PC-9 (cell line): ENCODE measurements at regions of chr16 and their contacts with region 1.

Region 1: GRCh38 chr16:4924593-4925378 is 12.2 kb downstream of the PPL start:
- DNase-seq: peak; percentile 96 to 99
- H3K4me3 ChIP-seq: peak overlapping the region; percentile 15; the same call in 1 of the 2 replicates
- H3K27ac ChIP-seq: peak overlapping the region; percentile 65
- H3K4me1 ChIP-seq: peaks cover 45% of the 10 kb centered on the region
- H3K27me3 ChIP-seq: no peaks in the 10 kb centered on the region
- CTCF ChIP-seq: no peak

Region 2: GRCh38 chr16:4624015-4624826 is 300.6 kb before region 1 on chr16 and contains the start of gene MGRN1:
- CTCF ChIA-PET with region 1: interaction called, 10 read pairs
- POLR2A ChIA-PET with region 1: no interaction called
- intact Hi-C with region 1: no loop called
- DNase-seq: peak; percentile 90 to 97
- H3K4me3 ChIP-seq: peak within 1 kb of the TSS; percentile 99
- H3K27ac ChIP-seq: peak within 1 kb of the TSS; percentile 69
- H3K4me1 ChIP-seq: peaks cover 7% of the 10 kb centered on the region
- H3K27me3 ChIP-seq: no peaks in the 10 kb centered on the region
- CTCF ChIP-seq: peak; percentile 96
- total RNA-seq, gene MGRN1: 67.9 and 70.4 TPM in 2 replicates

Region 3: DNA sequence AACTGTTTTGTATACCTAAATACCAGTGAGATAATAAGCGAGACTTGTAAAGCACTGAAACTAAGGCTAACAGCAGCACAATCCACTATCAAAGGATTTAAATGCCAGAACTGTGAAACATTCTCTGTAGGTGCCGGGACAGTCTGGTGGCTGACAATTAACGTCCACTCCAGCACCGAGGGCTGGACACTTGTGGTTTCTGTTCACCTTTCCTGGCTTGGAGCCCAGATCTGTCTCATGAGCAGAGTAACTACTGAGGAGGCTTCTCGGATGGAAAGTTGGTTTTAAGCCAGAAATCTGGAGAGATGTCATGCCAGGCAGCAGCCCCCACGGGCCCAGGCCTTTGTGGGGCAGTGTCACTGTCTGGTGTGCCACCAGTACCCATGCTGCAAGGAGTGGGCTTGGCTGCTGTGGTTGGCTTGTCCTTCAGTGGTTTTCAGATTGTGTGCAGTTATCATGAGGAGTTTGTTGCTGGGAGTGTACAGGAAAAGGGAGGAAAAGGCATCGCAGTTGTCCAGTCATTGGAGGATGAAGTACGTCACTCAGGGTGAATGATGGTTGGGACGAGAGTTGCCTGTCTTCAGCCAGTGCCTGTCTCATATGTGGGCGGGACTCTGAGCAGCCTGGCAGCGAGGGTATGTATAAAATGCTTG is 42.0 kb before region 1 on chr16:
- CTCF ChIA-PET with region 1: no interaction called
- POLR2A ChIA-PET with region 1: no interaction called
- intact Hi-C with region 1: loop called (anchors 1 kb)
- DNase-seq: peak; percentile 93
- H3K4me3 ChIP-seq: no peak overlapping the region
- H3K27ac ChIP-seq: peak overlapping the region; percentile 53
- H3K4me1 ChIP-seq: peaks cover 27% of the 10 kb centered on the region
- H3K27me3 ChIP-seq: no peaks in the 10 kb centered on the region
- CTCF ChIP-seq: no peak

Region 4: GRCh38 chr16:4894276-4895150 is 30.3 kb before region 1 on chr16:
- CTCF ChIA-PET with region 1: no interaction called
- POLR2A ChIA-PET with region 1: interaction called, 28 read pairs
- intact Hi-C with region 1: no loop called
- DNase-seq: no peak
- H3K4me3 ChIP-seq: no peak overlapping the region
- H3K27ac ChIP-seq: no peak overlapping the region
- H3K4me1 ChIP-seq: no peaks in the 10 kb centered on the region
- H3K27me3 ChIP-seq: no peaks in the 10 kb centered on the region
- CTCF ChIP-seq: no peak

Region 5: GRCh38 chr16:4936991-4937781 is 12.4 kb after region 1 on chr16 and contains the start of gene PPL:
- CTCF ChIA-PET with region 1: no interaction called
- POLR2A ChIA-PET with region 1: no interaction called
- intact Hi-C with region 1: loop called (anchors 1 kb)
- DNase-seq: peak; percentile 87 to 100
- H3K4me3 ChIP-seq: peak within 1 kb of the TSS; percentile 99
- H3K27ac ChIP-seq: peak within 1 kb of the TSS; percentile 38; the same call in 1 of the 2 replicates
- H3K4me1 ChIP-seq: peaks cover 36% of the 10 kb centered on the region
- H3K27me3 ChIP-seq: no peaks in the 10 kb centered on the region
- CTCF ChIP-seq: no peak
- total RNA-seq, gene PPL: 184 and 187 TPM in 2 replicates

Region 6: GRCh38 chr16:4987580-4988374 is 63.0 kb after region 1 on chr16:
- CTCF ChIA-PET with region 1: no interaction called
- POLR2A ChIA-PET with region 1: no interaction called
- intact Hi-C with region 1: no loop called
- DNase-seq: no peak
- H3K4me3 ChIP-seq: no peak overlapping the region
- H3K27ac ChIP-seq: no peak overlapping the region
- H3K4me1 ChIP-seq: no peaks in the 10 kb centered on the region
- H3K27me3 ChIP-seq: peaks cover 48% of the 10 kb centered on the region
- CTCF ChIP-seq: no peak